Activated CD4-positive, alpha-beta T cell treated with anti-CD3 and anti-CD28 coated beads, Interleukin-2, amount 10 ng/mL, durations not matched to agents 24 days and 14 days (primary cell): ENCODE measurements at regions of chr1 and their contacts with region 1.

Region 1: GRCh38 chr1:186325239-186325638 is 49.8 kb downstream of the TPR start:
- DNase-seq: peak; percentile 73
- H3K4me3 Mint-ChIP-seq: no peak overlapping the region
- H3K27ac Mint-ChIP-seq: no peak overlapping the region
- H3K4me1 Mint-ChIP-seq: peaks cover 29% of the 10 kb centered on the region
- H3K27me3 Mint-ChIP-seq: no peaks in the 10 kb centered on the region

Region 2: GRCh38 chr1:185813401-185813979 is 511.7 kb before region 1 on chr1:
- intact Hi-C with region 1: loop called (anchors 2 kb)
- DNase-seq: peak; percentile 59
- H3K4me3 Mint-ChIP-seq: no peak overlapping the region
- H3K27ac Mint-ChIP-seq: no peak overlapping the region
- H3K4me1 Mint-ChIP-seq: no peaks in the 10 kb centered on the region
- H3K27me3 Mint-ChIP-seq: peaks cover 3% of the 10 kb centered on the region

Region 3: DNA sequence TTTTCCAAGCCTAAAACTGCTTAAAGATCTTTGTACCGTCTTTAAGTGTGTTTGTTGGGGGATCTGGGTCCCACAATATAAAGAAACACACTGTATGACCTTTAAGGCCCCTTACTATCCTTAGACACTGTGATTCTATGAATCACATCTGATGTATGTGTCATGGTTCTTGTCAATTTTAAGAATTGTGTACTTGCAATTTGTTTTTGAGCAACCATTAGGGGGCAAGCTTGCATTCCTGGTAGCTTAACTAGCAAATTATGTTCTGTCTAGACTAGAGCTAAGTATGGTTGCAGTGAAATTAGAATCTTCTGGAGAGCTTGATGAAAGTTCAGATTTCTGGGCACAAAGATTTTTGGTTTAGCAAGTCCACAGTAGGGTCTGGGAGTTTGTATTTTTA is 169.6 kb before region 1 on chr1:
- intact Hi-C with region 1: loop called (anchors 1 kb)
- DNase-seq: peak; percentile 64
- H3K4me3 Mint-ChIP-seq: no peak overlapping the region
- H3K27ac Mint-ChIP-seq: no peak overlapping the region
- H3K4me1 Mint-ChIP-seq: no peaks in the 10 kb centered on the region
- H3K27me3 Mint-ChIP-seq: peaks cover 7% of the 10 kb centered on the region

Region 4: GRCh38 chr1:186272486-186272885 is 52.8 kb before region 1 on chr1:
- intact Hi-C with region 1: loop called (anchors 1 kb)
- DNase-seq: no peak
- H3K4me3 Mint-ChIP-seq: no peak overlapping the region
- H3K27ac Mint-ChIP-seq: no peak overlapping the region
- H3K4me1 Mint-ChIP-seq: peaks cover 9% of the 10 kb centered on the region
- H3K27me3 Mint-ChIP-seq: no peaks in the 10 kb centered on the region

Region 5: DNA sequence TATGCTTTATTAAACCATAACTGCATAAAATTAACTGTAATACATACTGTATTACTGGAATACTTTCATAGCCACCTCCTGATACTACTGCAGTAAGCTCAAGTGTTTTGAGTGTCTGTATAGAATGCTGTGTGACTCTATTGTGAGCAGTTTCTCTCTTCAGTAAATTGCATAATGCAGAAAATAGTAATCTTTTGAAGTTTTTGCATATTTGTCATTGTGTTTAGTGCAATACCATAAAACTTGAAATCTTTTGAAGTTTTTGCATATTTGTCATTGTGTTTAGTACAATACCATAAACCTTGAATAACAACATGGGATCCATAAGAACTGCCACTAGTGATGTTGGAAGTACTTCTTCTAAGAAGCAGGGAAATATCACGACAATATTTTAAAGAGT is 38.7 kb after region 1 on chr1:
- intact Hi-C with region 1: loop called (anchors 5 kb)
- DNase-seq: no peak
- H3K4me3 Mint-ChIP-seq: no peak overlapping the region
- H3K27ac Mint-ChIP-seq: no peak overlapping the region
- H3K4me1 Mint-ChIP-seq: peaks cover 9% of the 10 kb centered on the region
- H3K27me3 Mint-ChIP-seq: no peaks in the 10 kb centered on the region

Region 6: GRCh38 chr1:186420923-186421322 is 95.7 kb after region 1 on chr1:
- intact Hi-C with region 1: no loop called
- DNase-seq: peak; percentile 58
- H3K4me3 Mint-ChIP-seq: peak overlapping the region; percentile 69
- H3K27ac Mint-ChIP-seq: peak overlapping the region; percentile 86
- H3K4me1 Mint-ChIP-seq: peaks cover 23% of the 10 kb centered on the region
- H3K27me3 Mint-ChIP-seq: no peaks in the 10 kb centered on the region